ENCODE measurements at regions of chr9 and their contacts with region 1.

Region 1: GRCh38 chr9:104009826-104010225 is 84.3 kb upstream of the SMC2 start:
- DNase-seq: no peak

Region 2: DNA sequence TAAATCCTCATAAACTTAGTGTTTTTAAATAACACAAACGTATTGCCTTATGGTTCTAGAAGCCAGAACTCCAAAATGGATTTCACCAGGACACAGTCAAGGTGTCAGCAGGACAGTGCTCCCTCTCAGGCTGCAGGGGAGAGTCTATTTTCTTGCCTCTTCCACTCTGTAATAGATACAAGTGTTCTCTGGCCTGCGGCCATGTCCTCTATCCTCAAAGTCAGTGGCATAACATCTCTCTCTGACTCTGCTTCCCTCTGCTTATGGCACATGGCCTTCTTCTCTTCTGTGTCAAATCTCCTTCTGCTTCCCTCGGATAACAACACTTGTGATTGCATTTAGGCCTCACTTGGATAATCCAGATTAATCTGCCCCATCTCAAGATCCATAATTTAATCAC is 364.9 kb after region 1 on chr9:
- intact Hi-C with region 1: loop called in 1 of 2 experiments (anchors 10 kb)
- DNase-seq: no peak